Posterior cingulate gyrus (tissue), 11 donors: ENCODE measurements at regions of chr5 and their contacts with region 1.

Region 1: DNA sequence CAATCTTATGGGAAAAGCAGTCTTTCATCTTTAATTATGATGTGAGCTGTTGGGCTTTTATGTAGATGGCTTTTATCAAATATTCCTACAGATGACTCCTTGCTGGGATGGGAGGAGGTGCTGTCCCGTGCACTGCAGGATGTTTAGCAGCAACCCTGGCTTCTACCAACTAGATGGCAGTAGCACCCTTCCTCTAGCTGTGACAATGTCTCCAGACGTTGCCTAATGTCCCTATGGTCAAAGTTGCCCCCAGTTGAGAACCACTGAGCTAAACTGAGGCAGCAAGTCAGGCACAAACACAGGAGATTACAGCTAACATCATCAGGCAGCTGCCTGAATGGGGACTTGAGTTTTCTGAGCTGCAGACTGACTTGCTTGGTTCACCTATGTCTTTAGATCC is 401.9 kb upstream of the PDE4D start:
- DNase-seq: peak in 4 of 10 donors; percentile 15 to 61 (median 25)

Region 2: GRCh38 chr5:59351076-59351794 is 944.2 kb before region 1 on chr5:
- intact Hi-C with region 1: no loop called
- DNase-seq: no peak

Region 3: DNA sequence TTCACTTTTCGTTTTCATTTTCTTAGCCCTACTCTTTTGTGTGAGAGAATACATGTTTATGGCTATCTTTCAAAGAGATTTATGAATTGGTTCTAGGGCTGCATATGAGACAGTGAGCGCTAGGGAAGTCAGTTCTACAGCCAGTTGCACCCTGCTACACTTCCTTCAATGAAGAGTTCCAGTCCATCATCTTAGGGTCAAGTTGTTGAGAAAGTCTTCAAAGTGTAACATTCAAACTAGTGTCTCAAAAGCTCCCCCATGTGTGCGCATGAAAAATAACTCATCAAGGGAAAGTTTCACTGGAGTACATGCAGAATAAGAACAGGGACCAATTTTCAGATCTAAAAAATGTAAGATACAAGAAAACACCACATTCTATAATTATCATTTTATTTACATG is 87.3 kb after region 1 on chr5:
- intact Hi-C with region 1: loop called (anchors 10 kb)
- DNase-seq: no peak